MCF 10A (cell line): ENCODE measurements at regions of chr9 and their contacts with region 1.

Region 1: DNA sequence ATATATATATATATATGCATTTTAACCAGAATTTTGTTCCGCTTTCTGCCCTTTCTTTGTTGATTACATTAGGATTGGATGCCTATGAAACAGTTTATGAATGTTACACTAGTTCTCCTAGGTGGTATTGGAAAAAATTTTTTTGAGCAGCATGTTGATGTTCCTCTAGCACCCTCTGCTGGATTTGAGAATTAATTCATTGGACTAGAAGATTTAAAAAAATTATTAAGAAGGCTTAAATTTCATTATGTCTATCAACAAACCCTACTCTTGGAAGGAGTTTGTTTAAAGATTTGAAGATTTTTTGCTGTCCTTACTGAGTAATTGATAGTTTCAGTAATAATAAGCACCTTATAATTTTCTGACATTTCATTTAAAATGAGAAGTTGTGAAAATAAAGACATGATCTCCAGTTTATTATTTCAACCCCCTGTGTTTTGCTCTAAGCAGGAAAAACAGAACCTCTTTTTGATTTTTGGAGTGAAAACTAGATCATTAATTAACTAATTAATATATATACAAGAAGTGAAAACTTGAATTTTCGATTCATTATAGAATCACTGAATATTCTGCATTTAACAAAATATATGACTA is 89.6 kb downstream of the CCDC171 start:
- DNase-seq: peak; percentile 51
- H3K4me3 Mint-ChIP-seq: no peak overlapping the region
- H3K27ac Mint-ChIP-seq: no peak overlapping the region
- H3K4me1 Mint-ChIP-seq: no peaks in the 10 kb centered on the region
- H3K27me3 Mint-ChIP-seq: no peaks in the 10 kb centered on the region
- CTCF ChIP-seq: peak; percentile 35

Region 2: GRCh38 chr9:15722888-15723287 is 80.4 kb after region 1 on chr9:
- CTCF ChIA-PET with region 1: no interaction called
- POLR2A ChIA-PET with region 1: no interaction called
- intact Hi-C with region 1: no loop called
- DNase-seq: no peak
- H3K4me3 Mint-ChIP-seq: no peak overlapping the region
- H3K27ac Mint-ChIP-seq: no peak overlapping the region
- H3K4me1 Mint-ChIP-seq: peaks cover 16% of the 10 kb centered on the region
- H3K27me3 Mint-ChIP-seq: no peaks in the 10 kb centered on the region
- CTCF ChIP-seq: no peak

Region 3: DNA sequence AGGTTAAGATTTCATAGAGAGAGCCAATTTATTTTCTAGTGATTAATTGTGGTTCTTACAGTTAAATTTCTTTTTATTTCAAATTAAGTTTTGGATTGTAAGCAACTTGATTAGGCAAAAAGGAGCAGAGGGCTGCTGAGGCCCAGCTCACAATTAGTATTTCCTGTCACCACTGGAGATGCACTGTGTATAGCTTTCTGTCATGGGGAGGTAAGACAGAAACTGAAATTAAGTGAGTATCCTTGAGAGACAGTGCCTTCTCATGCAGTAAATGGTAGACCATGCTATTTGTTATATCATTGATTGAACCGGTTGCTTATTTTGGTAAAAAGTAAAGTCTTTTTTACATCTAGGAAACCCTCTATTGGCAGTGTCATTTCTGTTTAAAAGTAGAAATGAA is 101.0 kb after region 1 on chr9:
- CTCF ChIA-PET with region 1: no interaction called
- POLR2A ChIA-PET with region 1: no interaction called
- intact Hi-C with region 1: no loop called
- DNase-seq: no peak
- H3K4me3 Mint-ChIP-seq: no peak overlapping the region
- H3K27ac Mint-ChIP-seq: no peak overlapping the region
- H3K4me1 Mint-ChIP-seq: peaks cover 7% of the 10 kb centered on the region
- H3K27me3 Mint-ChIP-seq: no peaks in the 10 kb centered on the region
- CTCF ChIP-seq: no peak

Region 4: DNA sequence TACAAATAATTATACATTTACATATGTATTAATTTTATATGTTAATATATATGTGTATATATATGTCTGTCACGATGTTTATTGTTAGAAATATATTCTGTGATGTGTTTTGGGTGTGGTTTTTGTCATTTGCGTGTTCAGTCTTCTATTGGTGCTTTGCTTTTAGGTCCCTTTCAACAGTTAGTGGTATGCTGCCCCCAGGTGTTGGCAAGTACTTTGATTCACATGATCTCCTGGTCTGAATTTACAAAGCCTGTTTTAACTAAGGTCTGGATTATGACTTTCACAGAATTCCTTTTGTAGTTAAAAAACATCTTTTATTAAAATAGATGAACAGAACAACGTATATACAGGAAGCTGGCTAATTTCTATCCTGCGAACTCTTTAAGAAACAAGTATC is 181.8 kb after region 1 on chr9:
- CTCF ChIA-PET with region 1: interaction called, 4 read pairs
- POLR2A ChIA-PET with region 1: interaction called, 3 read pairs
- intact Hi-C with region 1: loop called (anchors 1 kb)
- DNase-seq: peak; percentile 71
- H3K4me3 Mint-ChIP-seq: no peak overlapping the region
- H3K27ac Mint-ChIP-seq: no peak overlapping the region
- H3K4me1 Mint-ChIP-seq: no peaks in the 10 kb centered on the region
- H3K27me3 Mint-ChIP-seq: no peaks in the 10 kb centered on the region
- CTCF ChIP-seq: peak; percentile 19